ENCODE measurements at regions of chr18 and their contacts with region 1.

Region 1: GRCh38 chr18:7684976-7685375 is 117.9 kb downstream of the PTPRM start:
- DNase-seq: no peak
- ATAC-seq: no peak

Region 2: GRCh38 chr18:7575157-7576028 is 109.6 kb before region 1 on chr18:
- intact Hi-C with region 1: loop called (anchors 5 kb)
- DNase-seq: no peak
- ATAC-seq: no peak

Region 3: DNA sequence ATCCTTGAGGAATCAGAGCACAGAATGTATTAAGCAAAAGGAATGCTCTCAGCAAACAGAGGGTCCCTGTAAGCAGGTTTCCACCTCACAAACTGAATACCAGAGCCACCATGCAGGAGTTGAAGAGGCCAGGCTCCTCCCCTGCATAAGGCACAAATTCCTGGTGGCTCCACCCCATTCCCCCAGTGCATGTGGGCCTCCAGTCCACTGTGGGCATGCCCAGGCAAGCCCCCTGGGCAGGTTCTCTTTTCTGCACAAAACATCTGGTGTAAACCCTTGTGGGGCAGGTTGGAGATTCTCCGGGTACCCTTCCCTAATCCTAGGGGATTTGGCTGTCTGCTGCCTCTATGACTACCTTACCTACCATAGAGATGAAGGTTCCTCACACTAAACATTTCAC is 48.7 kb after region 1 on chr18:
- intact Hi-C with region 1: loop called (anchors 5 kb)
- DNase-seq: no peak
- ATAC-seq: no peak

Region 4: GRCh38 chr18:8001711-8002301 is 316.8 kb after region 1 on chr18:
- intact Hi-C with region 1: no loop called
- DNase-seq: no peak
- ATAC-seq: no peak

Measured in Right ventricle myocardium inferior (tissue), 1 donor.